MCF 10A (cell line): ENCODE measurements at regions of chr4 and their contacts with region 1.

Region 1: GRCh38 chr4:143482840-143483239 is 30.7 kb upstream of the SMARCA5 start:
- DNase-seq: peak; percentile 57
- H3K4me3 Mint-ChIP-seq: no peak overlapping the region
- H3K27ac Mint-ChIP-seq: no peak overlapping the region
- H3K4me1 Mint-ChIP-seq: no peaks in the 10 kb centered on the region
- H3K27me3 Mint-ChIP-seq: no peaks in the 10 kb centered on the region
- CTCF ChIP-seq: peak; percentile 66

Region 2: DNA sequence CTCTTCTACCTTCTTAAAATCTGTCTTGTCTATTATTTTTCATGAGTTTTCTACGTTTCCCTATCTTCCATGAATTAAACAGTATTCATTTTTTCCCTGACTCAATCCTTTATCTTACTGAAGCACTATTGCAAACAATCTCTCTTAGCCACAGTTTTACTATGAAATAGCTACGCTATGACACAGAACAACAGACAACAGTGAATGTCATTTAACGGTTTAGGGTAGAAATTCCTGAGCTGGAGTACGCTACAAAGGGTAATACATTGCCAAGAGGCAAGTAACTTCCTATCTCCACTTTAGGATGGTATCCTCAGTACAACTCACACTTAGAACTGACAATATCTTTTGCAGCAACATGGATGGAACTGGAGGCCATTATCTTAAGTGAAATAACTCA is 1189.3 kb before region 1 on chr4:
- CTCF ChIA-PET with region 1: no interaction called
- POLR2A ChIA-PET with region 1: no interaction called
- intact Hi-C with region 1: no loop called
- DNase-seq: no peak
- H3K4me3 Mint-ChIP-seq: no peak overlapping the region
- H3K27ac Mint-ChIP-seq: no peak overlapping the region
- H3K4me1 Mint-ChIP-seq: no peaks in the 10 kb centered on the region
- H3K27me3 Mint-ChIP-seq: no peaks in the 10 kb centered on the region
- CTCF ChIP-seq: no peak

Region 3: GRCh38 chr4:142846729-142847596 is 635.9 kb before region 1 on chr4:
- CTCF ChIA-PET with region 1: interaction called, 3 read pairs
- POLR2A ChIA-PET with region 1: no interaction called
- intact Hi-C with region 1: loop called (anchors 2 kb)
- DNase-seq: peak; percentile 79
- H3K4me3 Mint-ChIP-seq: peak overlapping the region; percentile 82
- H3K27ac Mint-ChIP-seq: no peak overlapping the region
- H3K4me1 Mint-ChIP-seq: peaks cover 6% of the 10 kb centered on the region
- H3K27me3 Mint-ChIP-seq: no peaks in the 10 kb centered on the region
- CTCF ChIP-seq: peak; percentile 79

Region 4: DNA sequence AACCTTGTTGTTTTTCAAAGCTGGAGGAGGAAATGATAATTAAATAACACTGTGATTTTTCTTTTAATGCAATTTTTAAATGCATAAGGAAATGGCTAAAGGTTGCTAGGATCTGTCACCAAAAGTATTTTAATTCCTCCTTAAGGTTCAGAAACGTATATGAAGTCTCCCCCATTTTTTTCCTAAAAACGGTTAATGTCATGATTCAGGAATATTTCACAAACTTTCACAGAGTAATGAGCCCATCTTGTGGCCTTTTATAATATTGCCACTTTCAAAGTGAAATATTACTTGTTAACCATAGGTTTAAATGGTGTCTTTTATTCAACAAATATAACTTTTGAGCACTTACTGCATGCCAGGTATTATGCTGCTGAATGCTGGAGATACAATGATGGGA is 397.6 kb before region 1 on chr4:
- CTCF ChIA-PET with region 1: no interaction called
- POLR2A ChIA-PET with region 1: no interaction called
- intact Hi-C with region 1: loop called (anchors 5 kb)
- DNase-seq: peak; percentile 17
- H3K4me3 Mint-ChIP-seq: no peak overlapping the region
- H3K27ac Mint-ChIP-seq: no peak overlapping the region
- H3K4me1 Mint-ChIP-seq: peaks cover 14% of the 10 kb centered on the region
- H3K27me3 Mint-ChIP-seq: no peaks in the 10 kb centered on the region
- CTCF ChIP-seq: peak; percentile 31

Region 5: GRCh38 chr4:143335979-143336780 is 146.7 kb before region 1 on chr4:
- CTCF ChIA-PET with region 1: interaction called, 6 read pairs
- POLR2A ChIA-PET with region 1: no interaction called
- intact Hi-C with region 1: loop called (anchors 2 kb)
- DNase-seq: peak; percentile 91
- H3K4me3 Mint-ChIP-seq: peak overlapping the region; percentile 84
- H3K27ac Mint-ChIP-seq: peak overlapping the region; percentile 66
- H3K4me1 Mint-ChIP-seq: peaks cover 21% of the 10 kb centered on the region
- H3K27me3 Mint-ChIP-seq: no peaks in the 10 kb centered on the region
- CTCF ChIP-seq: no peak

Region 6: DNA sequence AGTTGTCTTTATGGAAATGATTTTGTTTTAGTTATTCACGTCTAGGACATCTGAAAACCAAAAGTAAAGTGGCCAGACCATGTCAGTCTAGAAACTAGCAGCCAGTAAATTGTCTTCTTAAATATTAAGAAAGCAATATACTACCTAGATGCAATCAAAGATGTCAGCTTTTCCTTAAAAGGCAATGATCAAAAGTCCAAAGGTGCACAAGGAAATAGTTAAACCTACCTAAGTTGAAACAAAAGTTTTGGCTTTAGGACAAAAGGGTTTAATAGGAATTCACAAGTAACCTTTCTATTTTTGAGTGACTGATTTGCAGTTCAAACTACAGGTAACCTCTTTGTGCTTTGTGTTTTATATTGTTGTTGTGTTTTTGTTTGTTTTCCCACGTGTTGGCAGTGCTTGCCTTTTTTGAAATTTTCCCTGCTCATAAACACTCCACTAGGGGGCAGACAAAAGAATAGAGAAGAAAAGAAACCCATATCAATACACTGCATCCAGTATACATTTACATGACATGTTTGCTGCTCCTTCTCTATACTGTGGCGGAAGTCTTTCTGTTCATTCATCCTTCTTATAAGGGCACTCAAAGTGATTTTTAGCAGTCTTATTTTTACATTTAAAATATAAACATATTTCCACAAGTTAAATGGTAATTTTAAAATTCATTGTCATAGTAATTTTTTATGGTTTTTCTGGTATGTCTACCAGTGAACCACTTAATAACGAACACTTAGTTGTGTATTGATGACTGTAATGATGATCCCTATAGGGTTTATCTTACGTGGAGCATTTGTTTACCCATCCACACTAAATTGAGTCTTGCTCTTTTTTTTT is 83.5 kb before region 1 on chr4:
- CTCF ChIA-PET with region 1: no interaction called
- POLR2A ChIA-PET with region 1: no interaction called
- intact Hi-C with region 1: loop called (anchors 2 kb)
- DNase-seq: peak; percentile 49
- H3K4me3 Mint-ChIP-seq: no peak overlapping the region
- H3K27ac Mint-ChIP-seq: no peak overlapping the region
- H3K4me1 Mint-ChIP-seq: peaks cover 10% of the 10 kb centered on the region
- H3K27me3 Mint-ChIP-seq: no peaks in the 10 kb centered on the region
- CTCF ChIP-seq: peak; percentile 56